ENCODE measurements at regions of chr4 and their contacts with region 1.

Region 1: GRCh38 chr4:173301518-173302201 is 32.5 kb downstream of the HMGB2 start:
- DNase-seq: no peak

Region 2: GRCh38 chr4:173013232-173013930 is 288.3 kb before region 1 on chr4:
- CTCF ChIA-PET with region 1: interaction called, 37 read pairs
- POLR2A ChIA-PET with region 1: interaction called, 3 read pairs
- DNase-seq: peak; percentile 44

Region 3: DNA sequence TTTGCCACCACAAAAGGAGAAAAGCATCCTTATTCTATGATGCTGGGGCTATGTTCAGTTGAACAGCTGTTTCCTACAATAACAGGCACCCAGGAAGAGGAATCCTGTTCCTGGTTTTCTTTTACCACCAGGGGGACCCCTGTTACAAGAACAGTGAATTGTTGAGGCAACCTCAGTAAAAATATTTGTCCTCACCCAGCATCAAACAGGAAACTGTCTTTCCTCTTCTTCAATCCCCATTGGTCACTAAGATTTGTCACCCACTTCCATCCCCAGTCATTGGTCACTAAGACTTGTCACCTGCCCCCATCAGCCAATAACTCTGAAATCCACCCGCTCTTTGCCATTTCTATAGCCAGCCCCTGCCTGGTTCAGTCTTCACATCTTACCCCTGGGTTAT is 276.5 kb before region 1 on chr4:
- CTCF ChIA-PET with region 1: interaction called, 31 read pairs
- POLR2A ChIA-PET with region 1: no interaction called
- DNase-seq: peak; percentile 59

Region 4: GRCh38 chr4:173273941-173274340 is 27.7 kb before region 1 on chr4:
- CTCF ChIA-PET with region 1: interaction called, 20 read pairs
- POLR2A ChIA-PET with region 1: no interaction called
- DNase-seq: no peak

Region 5: DNA sequence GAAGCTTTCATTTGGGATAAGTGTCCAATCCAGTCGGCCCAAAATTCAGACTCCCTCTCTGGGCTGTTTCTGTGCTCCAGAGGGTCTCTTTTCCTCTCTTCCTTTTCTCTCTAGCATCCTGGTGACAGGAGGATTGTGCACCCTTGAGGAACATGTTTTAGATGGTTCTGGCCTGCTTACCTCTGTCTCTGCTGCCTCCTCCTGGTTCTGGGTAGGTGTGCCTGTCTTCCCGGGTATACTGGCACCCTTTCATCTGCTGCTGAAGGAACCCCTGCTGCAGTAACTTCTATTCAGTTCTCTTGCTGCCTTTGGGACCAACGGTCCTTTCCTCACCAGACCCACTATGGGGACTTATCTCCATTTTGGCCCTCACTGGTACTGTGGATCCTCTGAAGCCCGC is 20.7 kb before region 1 on chr4:
- CTCF ChIA-PET with region 1: interaction called, 20 read pairs
- POLR2A ChIA-PET with region 1: no interaction called
- DNase-seq: no peak

Region 6: GRCh38 chr4:173288296-173288695 is 13.4 kb before region 1 on chr4:
- CTCF ChIA-PET with region 1: interaction called, 43 read pairs
- POLR2A ChIA-PET with region 1: no interaction called
- DNase-seq: no peak

Region 7: GRCh38 chr4:173591760-173592159 is 290.1 kb after region 1 on chr4:
- CTCF ChIA-PET with region 1: no interaction called
- POLR2A ChIA-PET with region 1: no interaction called
- DNase-seq: no peak